Dendritic cell treated with granulocyte-macrophage colony-stimulating factor and Interleukin-4, amounts not matched to agents 40 ng/mL and 50 ng/mL, for 4 days (primary cell): ENCODE measurements at regions of chr2 and their contacts with region 1.

Region 1: GRCh38 chr2:85888684-85889626 is at the start of gene ST3GAL5:
- H3K4me3 Mint-ChIP-seq: peak within 1 kb of the TSS; percentile 84
- H3K27ac Mint-ChIP-seq: peak within 1 kb of the TSS; percentile 98
- H3K4me1 Mint-ChIP-seq: peaks cover 74% of the 10 kb centered on the region
- H3K27me3 Mint-ChIP-seq: no peaks in the 10 kb centered on the region

Region 2: GRCh38 chr2:85826990-85827878 is 61.7 kb before region 1 on chr2:
- intact Hi-C with region 1: loop called (anchors 5 kb)
- H3K4me3 Mint-ChIP-seq: no peak overlapping the region
- H3K27ac Mint-ChIP-seq: no peak overlapping the region
- H3K4me1 Mint-ChIP-seq: peaks cover 16% of the 10 kb centered on the region
- H3K27me3 Mint-ChIP-seq: peaks cover 7% of the 10 kb centered on the region

Region 3: DNA sequence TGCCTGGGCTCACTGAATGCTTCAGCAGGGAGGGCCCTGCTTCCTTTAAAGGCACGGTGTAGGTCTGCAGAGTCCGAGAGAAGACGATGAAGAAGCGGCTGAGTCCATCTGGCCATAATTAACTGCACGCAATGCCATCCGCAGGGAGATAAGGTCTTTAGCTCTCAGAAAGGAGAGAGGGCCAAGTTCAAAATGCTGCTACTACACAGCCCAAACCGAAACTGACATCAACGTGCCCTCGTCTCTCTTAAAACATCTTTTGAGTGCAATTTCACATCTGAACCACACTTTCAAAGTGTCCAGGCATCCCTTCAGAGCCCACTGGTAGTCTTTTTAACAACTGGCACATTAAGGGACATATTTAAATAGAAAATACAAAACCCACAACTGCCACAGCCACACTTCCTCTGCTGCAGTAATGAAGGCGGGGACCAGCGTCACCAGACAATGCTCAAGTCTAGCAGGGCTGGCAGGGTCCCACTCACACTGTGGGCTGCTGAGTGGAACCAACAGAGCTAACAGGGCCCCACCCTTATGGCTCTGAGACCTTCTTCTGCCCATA is 35.9 kb before region 1 on chr2:
- intact Hi-C with region 1: loop called (anchors 5 kb)
- H3K4me3 Mint-ChIP-seq: peak overlapping the region; percentile 39
- H3K27ac Mint-ChIP-seq: peak overlapping the region; percentile 90
- H3K4me1 Mint-ChIP-seq: peaks cover 27% of the 10 kb centered on the region
- H3K27me3 Mint-ChIP-seq: no peaks in the 10 kb centered on the region

Region 4: DNA sequence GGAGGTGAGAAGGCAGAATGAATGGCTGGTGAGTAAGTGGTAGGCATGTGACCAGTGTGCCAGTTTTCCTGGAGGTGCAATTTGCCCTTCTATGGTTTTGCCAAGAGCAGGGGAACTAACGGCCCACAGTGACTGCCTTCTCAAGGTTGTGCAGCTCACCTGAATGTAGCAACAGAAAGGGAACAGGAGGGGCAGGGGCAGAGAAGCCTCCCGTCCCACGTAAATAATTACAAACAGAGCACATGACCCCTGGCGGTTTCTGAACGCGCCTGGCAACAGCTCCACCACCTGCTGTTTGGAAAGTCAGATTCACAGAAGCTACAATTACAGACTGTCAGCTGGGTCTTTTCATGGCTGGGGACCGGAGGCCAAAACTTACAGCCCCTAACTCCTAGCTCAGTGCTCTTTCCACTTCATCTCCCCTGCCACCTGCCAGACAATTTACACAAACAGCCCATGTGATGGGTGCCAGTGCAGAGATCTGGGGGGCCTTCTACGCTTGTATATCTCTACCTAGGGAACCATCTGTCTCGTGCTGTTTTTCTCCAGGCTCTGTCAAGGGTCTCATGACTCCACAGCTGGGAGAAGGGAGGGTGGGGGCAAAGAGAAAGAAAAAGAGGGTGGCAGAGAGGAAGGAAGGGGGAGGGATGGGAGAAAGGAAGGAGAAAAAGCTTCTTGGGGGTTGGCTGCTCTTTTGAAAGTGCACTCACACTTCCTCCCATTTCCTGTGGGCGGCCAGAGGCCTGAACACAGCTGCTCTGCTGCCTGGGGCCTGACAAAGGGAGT is 147.1 kb after region 1 on chr2:
- intact Hi-C with region 1: loop called (anchors 5 kb)
- H3K4me3 Mint-ChIP-seq: peak overlapping the region; percentile 60
- H3K27ac Mint-ChIP-seq: peak overlapping the region; percentile 94
- H3K4me1 Mint-ChIP-seq: peaks cover 71% of the 10 kb centered on the region
- H3K27me3 Mint-ChIP-seq: no peaks in the 10 kb centered on the region

Region 5: GRCh38 chr2:86079981-86080911 is 191.3 kb after region 1 on chr2:
- intact Hi-C with region 1: loop called (anchors 1 kb)
- H3K4me3 Mint-ChIP-seq: no peak overlapping the region
- H3K27ac Mint-ChIP-seq: peak overlapping the region; percentile 65
- H3K4me1 Mint-ChIP-seq: peaks cover 19% of the 10 kb centered on the region
- H3K27me3 Mint-ChIP-seq: no peaks in the 10 kb centered on the region